Breast epithelium (tissue), 4 donors: ENCODE measurements at regions of chr12 and their contacts with region 1.

Region 1: DNA sequence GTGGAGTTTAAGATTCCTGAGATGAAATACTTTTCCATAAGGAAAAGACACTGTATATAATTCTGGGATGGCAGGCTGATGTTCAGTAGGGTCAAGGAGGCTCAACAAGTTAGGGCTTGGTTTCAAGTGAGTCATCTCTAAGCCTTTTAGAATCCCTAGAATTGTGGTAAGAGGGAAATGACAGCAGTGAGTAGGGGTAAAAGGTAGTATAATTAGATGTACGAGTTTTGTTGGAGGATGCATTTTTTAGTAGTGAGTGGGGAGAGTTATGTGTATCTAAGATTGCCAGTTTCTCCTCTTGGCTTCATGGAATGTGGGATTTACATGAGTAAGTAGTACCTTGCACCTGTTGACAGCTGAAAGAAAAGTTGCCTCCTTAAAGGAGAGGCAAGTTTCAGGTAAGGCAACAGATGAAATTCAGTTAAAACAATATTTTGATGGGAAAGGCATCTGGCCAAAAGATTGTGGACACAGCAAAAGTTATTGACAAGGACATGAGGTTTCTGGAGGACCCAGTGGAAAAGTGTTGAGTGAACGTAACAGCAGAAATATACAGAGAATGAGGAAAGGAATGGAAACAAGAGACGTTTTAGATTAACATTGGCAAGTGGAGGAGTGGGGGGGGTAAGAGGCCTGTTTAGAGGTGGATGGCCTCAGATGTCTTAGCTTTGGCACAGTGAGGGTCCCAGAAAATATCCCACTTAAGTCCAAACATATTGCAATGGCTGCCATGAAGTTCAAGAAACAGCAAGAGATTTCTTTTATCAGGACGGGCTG is 21.8 kb downstream of the LMO3 start:
- DNase-seq: no peak
- H3K4me3 ChIP-seq: no peak overlapping the region
- H3K27ac ChIP-seq: no peak overlapping the region
- H3K4me1 ChIP-seq: no peaks in the 10 kb centered on the region
- H3K27me3 ChIP-seq: no peaks in the 10 kb centered on the region
- CTCF ChIP-seq: no peak
- POLR2A ChIP-seq: no peak

Region 2: GRCh38 chr12:16299403-16299802 is 284.8 kb before region 1 on chr12:
- intact Hi-C with region 1: no loop called
- DNase-seq: no peak
- H3K4me3 ChIP-seq: no peak overlapping the region
- H3K27ac ChIP-seq: no peak overlapping the region
- H3K4me1 ChIP-seq: no peaks in the 10 kb centered on the region
- H3K27me3 ChIP-seq: no peaks in the 10 kb centered on the region
- CTCF ChIP-seq: no peak
- POLR2A ChIP-seq: no peak

Region 3: DNA sequence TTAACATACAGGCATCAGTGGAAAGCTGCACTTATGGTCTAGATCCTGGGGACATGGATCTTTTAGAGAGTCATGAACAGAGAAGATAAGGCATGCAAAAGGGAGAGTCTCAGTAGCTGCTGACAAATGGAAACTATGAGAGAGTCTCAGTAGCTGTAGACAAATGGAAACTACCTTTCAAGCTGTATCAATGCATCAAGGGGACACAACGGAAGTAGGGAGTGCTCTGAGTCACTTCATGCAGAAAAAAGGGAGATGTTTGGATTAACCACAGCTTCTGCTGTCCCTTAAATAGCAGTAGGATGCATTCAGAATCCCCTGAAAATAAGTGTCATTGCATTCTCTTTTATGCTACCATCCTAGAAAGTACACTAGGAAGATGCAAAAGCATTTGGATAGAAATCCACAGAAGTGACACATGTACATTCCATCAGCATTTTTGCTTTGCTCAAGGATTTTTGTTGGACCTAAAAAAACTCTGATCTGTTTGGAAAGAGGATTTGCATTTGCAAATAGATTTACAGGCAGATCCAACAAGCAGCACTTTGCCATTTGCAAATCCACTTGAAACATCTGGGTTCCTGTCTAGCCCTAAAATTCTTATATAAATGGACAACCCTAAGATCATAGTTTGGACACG is 249.3 kb after region 1 on chr12:
- intact Hi-C with region 1: loop called (anchors 5 kb)
- DNase-seq: no peak
- H3K4me3 ChIP-seq: no peak overlapping the region
- H3K27ac ChIP-seq: no peak overlapping the region
- H3K4me1 ChIP-seq: no peaks in the 10 kb centered on the region
- H3K27me3 ChIP-seq: no peaks in the 10 kb centered on the region
- CTCF ChIP-seq: no peak
- POLR2A ChIP-seq: no peak